Panc1 (cell line): ENCODE measurements at regions of chr6 and their contacts with region 1.

Region 1: DNA sequence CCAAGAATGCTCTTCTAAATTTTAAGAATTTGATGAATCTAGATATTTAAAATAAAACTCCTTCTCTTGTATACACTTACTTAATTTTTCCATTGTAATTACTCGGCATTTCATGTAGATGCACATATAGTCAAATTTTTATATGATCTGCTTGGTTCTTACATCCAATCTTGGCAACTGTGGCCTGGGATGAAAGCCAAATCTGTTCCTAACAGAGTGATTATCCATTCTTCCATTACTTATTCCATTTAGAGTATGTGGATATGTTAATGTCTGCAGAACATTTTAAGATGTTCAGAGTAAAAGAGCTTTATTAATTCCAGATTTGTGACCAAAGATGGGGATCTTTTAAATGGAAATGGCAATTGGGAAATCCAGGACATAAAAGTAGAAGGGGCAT is 144.1 kb upstream of the PDE7B start:
- DNase-seq: no peak
- ATAC-seq: no peak
- H3K4me3 ChIP-seq: no peak overlapping the region
- H3K27ac ChIP-seq: no peak overlapping the region
- H3K4me1 ChIP-seq: no peaks in the 10 kb centered on the region
- H3K27me3 ChIP-seq: no peaks in the 10 kb centered on the region
- CTCF ChIP-seq: no peak

Region 2: DNA sequence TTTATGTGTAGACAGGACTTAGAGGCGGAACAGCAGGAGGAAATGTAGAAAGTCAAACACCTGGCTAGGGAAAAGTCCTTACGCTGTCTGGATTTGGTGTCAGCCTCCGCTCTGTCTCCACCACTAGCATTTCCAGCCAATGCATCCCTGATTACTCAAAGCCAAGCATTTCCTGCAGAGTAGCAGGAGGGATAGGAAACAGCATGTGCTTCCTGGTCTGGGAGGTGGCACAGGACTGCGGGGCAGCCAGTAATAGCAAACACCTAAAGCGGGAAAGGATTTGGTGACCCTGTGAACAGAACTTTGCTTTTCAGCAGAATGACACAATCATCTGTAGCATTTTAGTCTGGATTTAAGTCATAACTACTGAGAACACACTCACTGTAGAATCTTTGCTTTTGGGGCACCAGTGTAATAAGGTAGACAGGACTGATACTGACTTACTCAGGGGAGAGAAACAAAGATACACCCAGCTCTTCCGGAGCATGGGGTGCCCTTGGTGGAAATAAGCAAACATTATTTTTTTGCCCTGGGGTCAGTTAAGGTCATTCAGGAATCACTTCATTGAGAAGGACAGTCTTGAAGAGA is 76.5 kb before region 1 on chr6:
- CTCF ChIA-PET with region 1: no interaction called
- POLR2A ChIA-PET with region 1: no interaction called
- in situ Hi-C with region 1: no loop called
- intact Hi-C with region 1: no loop called
- DNase-seq: no peak
- ATAC-seq: no peak
- H3K4me3 ChIP-seq: no peak overlapping the region
- H3K27ac ChIP-seq: no peak overlapping the region
- H3K4me1 ChIP-seq: no peaks in the 10 kb centered on the region
- H3K27me3 ChIP-seq: no peaks in the 10 kb centered on the region
- CTCF ChIP-seq: no peak

Region 3: DNA sequence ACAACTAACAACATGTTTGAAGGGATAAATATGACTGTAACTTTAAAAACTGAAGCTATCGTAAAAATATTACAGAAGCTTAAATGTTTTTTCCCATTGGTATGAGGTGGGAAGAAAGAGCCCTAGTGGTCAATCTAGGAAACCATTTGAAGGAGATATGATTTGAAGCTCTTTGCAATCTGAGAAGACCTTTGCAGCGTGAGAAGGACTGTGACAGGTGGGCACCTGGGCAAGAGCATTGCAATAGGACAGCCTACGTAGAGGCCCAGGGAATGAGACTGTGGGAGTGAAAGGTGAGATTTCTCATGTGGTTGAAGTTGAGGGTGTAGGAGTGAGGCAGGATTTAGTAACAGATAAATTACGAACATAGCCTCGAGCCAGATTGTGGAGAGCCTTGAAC is 36.0 kb after region 1 on chr6:
- CTCF ChIA-PET with region 1: no interaction called
- POLR2A ChIA-PET with region 1: no interaction called
- in situ Hi-C with region 1: no loop called
- intact Hi-C with region 1: no loop called
- DNase-seq: no peak
- ATAC-seq: no peak
- H3K4me3 ChIP-seq: no peak overlapping the region
- H3K27ac ChIP-seq: no peak overlapping the region
- H3K4me1 ChIP-seq: no peaks in the 10 kb centered on the region
- H3K27me3 ChIP-seq: no peaks in the 10 kb centered on the region
- CTCF ChIP-seq: peak; percentile 19

Region 4: GRCh38 chr6:135861189-135861588 is 153.8 kb after region 1 on chr6:
- CTCF ChIA-PET with region 1: no interaction called
- POLR2A ChIA-PET with region 1: no interaction called
- in situ Hi-C with region 1: no loop called
- intact Hi-C with region 1: loop called (anchors 5 kb)
- DNase-seq: no peak
- ATAC-seq: no peak
- H3K4me3 ChIP-seq: no peak overlapping the region
- H3K27ac ChIP-seq: no peak overlapping the region
- H3K4me1 ChIP-seq: no peaks in the 10 kb centered on the region
- H3K27me3 ChIP-seq: no peaks in the 10 kb centered on the region
- CTCF ChIP-seq: no peak

Region 5: GRCh38 chr6:135901774-135902524 is 194.5 kb after region 1 on chr6:
- CTCF ChIA-PET with region 1: no interaction called
- POLR2A ChIA-PET with region 1: no interaction called
- in situ Hi-C with region 1: no loop called
- intact Hi-C with region 1: no loop called
- DNase-seq: no peak
- ATAC-seq: no peak
- H3K4me3 ChIP-seq: no peak overlapping the region
- H3K27ac ChIP-seq: no peak overlapping the region
- H3K4me1 ChIP-seq: no peaks in the 10 kb centered on the region
- H3K27me3 ChIP-seq: no peaks in the 10 kb centered on the region
- CTCF ChIP-seq: no peak